ENCODE measurements at regions of chr1 and their contacts with region 1.

Region 1: GRCh38 chr1:10507111-10507879 is 32.5 kb downstream of the PEX14 start:
- DNase-seq: peak; percentile 67
- ATAC-seq: peak; percentile 74
- H3K4me3 ChIP-seq: no peak overlapping the region
- H3K27ac ChIP-seq: peak overlapping the region; percentile 94
- H3K4me1 ChIP-seq: peaks cover 69% of the 10 kb centered on the region
- H3K27me3 ChIP-seq: no peaks in the 10 kb centered on the region
- CTCF ChIP-seq: peak; percentile 95

Region 2: GRCh38 chr1:10283318-10283984 is 223.8 kb before region 1 on chr1:
- CTCF ChIA-PET with region 1: no interaction called
- POLR2A ChIA-PET with region 1: no interaction called
- in situ Hi-C with region 1: no loop called
- intact Hi-C with region 1: no loop called
- DNase-seq: no peak
- ATAC-seq: no peak
- H3K4me3 ChIP-seq: no peak overlapping the region
- H3K27ac ChIP-seq: no peak overlapping the region
- H3K4me1 ChIP-seq: no peaks in the 10 kb centered on the region
- H3K27me3 ChIP-seq: no peaks in the 10 kb centered on the region
- CTCF ChIP-seq: no peak

Region 3: DNA sequence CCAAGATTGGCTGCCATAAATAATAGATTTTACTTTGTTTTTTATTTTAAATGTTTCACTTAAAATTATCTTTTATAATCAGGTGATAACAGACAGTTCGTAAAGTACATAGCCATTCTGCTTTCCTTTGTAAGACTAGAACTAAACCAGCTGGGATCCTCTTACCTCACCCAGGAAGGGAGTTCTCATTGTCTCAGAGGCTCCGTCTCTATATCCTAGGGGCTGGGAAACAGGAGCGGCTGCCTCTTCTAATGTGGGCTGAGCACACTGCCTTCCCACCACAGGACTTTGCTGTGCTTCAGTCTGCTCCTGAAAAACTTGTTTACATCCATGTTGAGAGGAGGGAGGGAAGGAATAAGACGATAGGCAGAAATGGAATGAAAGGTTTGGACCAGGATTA is 154.0 kb before region 1 on chr1:
- CTCF ChIA-PET with region 1: no interaction called
- POLR2A ChIA-PET with region 1: no interaction called
- in situ Hi-C with region 1: no loop called
- intact Hi-C with region 1: no loop called
- DNase-seq: no peak
- ATAC-seq: no peak
- H3K4me3 ChIP-seq: no peak overlapping the region
- H3K27ac ChIP-seq: no peak overlapping the region
- H3K4me1 ChIP-seq: no peaks in the 10 kb centered on the region
- H3K27me3 ChIP-seq: no peaks in the 10 kb centered on the region
- CTCF ChIP-seq: no peak

Region 4: DNA sequence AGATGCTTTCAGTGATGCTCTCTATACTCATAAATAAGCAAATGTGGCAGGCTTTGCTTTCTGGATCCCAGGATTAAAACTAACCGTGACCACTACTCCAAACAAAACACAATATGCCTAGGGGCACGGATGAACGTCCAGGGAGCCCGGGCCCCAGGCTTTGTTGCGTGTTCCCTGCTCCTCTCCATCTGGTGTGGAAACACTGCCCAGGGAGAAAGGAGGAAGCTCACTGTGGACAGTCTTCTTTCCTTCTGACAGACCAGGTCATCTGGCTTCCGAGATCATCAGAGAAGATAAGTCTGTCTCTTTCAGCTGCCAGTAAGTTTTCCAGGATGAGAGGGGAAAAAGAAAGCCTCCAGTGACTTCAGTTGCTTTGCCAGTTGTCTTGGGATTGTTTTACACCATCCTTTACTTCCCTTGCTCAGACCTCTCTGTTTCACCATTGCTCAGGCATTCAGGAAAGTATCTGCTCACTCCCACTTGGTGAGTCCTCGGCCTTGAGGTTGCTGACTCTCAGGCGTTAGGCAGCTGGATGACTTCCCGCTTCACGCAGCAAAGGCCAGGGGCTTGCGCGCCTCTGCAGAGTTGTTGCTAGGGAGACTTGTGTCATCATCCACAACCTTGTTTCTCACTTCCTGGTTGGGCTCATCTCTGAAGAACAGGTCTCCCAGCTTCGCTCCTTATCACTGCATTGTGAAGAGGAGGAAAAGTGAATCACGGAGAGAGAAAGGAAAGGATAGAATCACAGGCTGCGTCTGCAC is 129.0 kb before region 1 on chr1:
- CTCF ChIA-PET with region 1: interaction called, 17 read pairs
- POLR2A ChIA-PET with region 1: no interaction called
- in situ Hi-C with region 1: no loop called
- intact Hi-C with region 1: no loop called
- DNase-seq: no peak
- ATAC-seq: no peak
- H3K4me3 ChIP-seq: no peak overlapping the region
- H3K27ac ChIP-seq: no peak overlapping the region
- H3K4me1 ChIP-seq: no peaks in the 10 kb centered on the region
- H3K27me3 ChIP-seq: no peaks in the 10 kb centered on the region
- CTCF ChIP-seq: no peak

Region 5: GRCh38 chr1:10628685-10629084 is 121.4 kb after region 1 on chr1:
- CTCF ChIA-PET with region 1: interaction called, 3 read pairs
- POLR2A ChIA-PET with region 1: no interaction called
- in situ Hi-C with region 1: no loop called
- intact Hi-C with region 1: loop called (anchors 10 kb)
- DNase-seq: no peak
- ATAC-seq: no peak
- H3K4me3 ChIP-seq: no peak overlapping the region
- H3K27ac ChIP-seq: no peak overlapping the region
- H3K4me1 ChIP-seq: no peaks in the 10 kb centered on the region
- H3K27me3 ChIP-seq: no peaks in the 10 kb centered on the region
- CTCF ChIP-seq: no peak

Region 6: DNA sequence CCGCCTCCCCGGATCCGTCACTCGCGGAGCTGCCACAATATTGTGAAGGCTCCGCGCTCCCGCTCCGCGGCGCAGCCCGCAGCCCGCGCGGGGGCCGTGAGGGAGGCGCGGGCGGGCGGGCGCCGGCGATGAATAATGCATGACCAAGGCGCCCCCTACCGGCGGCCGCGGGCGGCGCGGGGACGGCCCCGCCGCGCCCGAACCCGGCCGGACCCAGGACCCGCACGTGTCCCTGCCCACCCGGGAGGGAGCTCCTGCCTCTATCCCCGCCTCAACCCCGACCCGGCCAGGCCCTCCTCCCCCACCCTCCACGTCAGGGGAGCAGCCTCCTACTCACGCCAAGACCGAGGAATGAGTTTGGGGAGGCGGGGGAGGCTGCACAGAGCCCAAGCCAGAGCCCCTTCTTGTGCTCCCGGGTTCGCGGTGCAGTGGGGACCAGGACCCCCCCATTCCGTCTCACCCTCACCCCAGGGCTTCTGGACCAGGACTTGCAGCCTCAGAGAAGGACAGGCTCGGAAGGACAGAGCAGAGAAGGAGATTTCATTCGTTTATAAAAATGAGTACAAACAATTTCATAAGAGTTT is 359.9 kb after region 1 on chr1:
- CTCF ChIA-PET with region 1: interaction called, 3 read pairs
- POLR2A ChIA-PET with region 1: no interaction called
- in situ Hi-C with region 1: no loop called
- intact Hi-C with region 1: loop called (anchors 5 kb)
- DNase-seq: no peak
- ATAC-seq: peak; percentile 92
- H3K4me3 ChIP-seq: peak overlapping the region; percentile 30 to 46
- H3K27ac ChIP-seq: peak overlapping the region; percentile 65
- H3K4me1 ChIP-seq: peaks cover 16% of the 10 kb centered on the region
- H3K27me3 ChIP-seq: no peaks in the 10 kb centered on the region
- CTCF ChIP-seq: peak; percentile 95

Region 7: GRCh38 chr1:10917513-10918454 is 410.5 kb after region 1 on chr1:
- CTCF ChIA-PET with region 1: interaction called, 13 read pairs
- POLR2A ChIA-PET with region 1: no interaction called
- in situ Hi-C with region 1: no loop called
- intact Hi-C with region 1: no loop called
- DNase-seq: no peak
- ATAC-seq: no peak
- H3K4me3 ChIP-seq: no peak overlapping the region
- H3K27ac ChIP-seq: no peak overlapping the region
- H3K4me1 ChIP-seq: no peaks in the 10 kb centered on the region
- H3K27me3 ChIP-seq: no peaks in the 10 kb centered on the region
- CTCF ChIP-seq: no peak